ENCODE measurements at regions of chr6 and their contacts with region 1.

Region 1: GRCh38 chr6:118611334-118611733 is 40.1 kb downstream of the CEP85L start:
- DNase-seq: no peak
- ATAC-seq: no peak
- H3K4me3 ChIP-seq: no peak overlapping the region
- H3K4me3 Mint-ChIP-seq: peak overlapping the region in 1 of 10 donors; percentile 41
- H3K27ac ChIP-seq: no peak overlapping the region
- H3K27ac Mint-ChIP-seq: peak overlapping the region in 2 of 9 donors; percentile 3 to 41
- H3K4me1 ChIP-seq: peaks cover 0 to 3% of the 10 kb centered on the region in 2 donors
- H3K4me1 Mint-ChIP-seq: peaks cover 34 to 91% (median 79%) of the 10 kb centered on the region in 7 donors
- H3K27me3 ChIP-seq: no peaks in the 10 kb centered on the region
- H3K27me3 Mint-ChIP-seq: no peaks in the 10 kb centered on the region

Region 2: DNA sequence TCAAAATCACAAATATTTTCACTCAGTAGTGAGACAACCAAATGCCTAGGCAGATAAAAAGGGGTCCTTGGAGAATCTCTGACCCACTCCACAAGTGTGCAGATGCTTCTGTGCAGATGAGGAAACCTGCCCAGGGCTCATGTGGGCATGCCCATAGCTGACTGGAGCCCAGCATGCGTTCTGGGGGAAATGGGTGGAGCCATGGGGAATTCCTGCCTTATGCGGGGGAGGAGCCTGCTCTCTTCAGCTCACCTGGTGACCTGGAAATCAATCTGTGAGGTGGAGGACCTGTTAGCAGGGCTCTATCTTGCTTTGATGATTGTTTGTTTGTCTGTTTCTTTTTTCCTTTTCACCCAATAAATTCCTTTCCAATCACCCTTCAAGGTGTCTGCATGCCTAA is 86.6 kb before region 1 on chr6:
- CTCF ChIA-PET with region 1: no interaction called
- POLR2A ChIA-PET with region 1: no interaction called
- intact Hi-C with region 1: no loop called
- DNase-seq: no peak
- ATAC-seq: peak; percentile 26
- H3K4me3 ChIP-seq: no peak overlapping the region
- H3K4me3 Mint-ChIP-seq: no peak overlapping the region
- H3K27ac ChIP-seq: no peak overlapping the region
- H3K27ac Mint-ChIP-seq: peak overlapping the region in 2 of 9 donors; percentile 38 to 71
- H3K4me1 ChIP-seq: no peaks in the 10 kb centered on the region
- H3K4me1 Mint-ChIP-seq: peaks cover 17 to 58% (median 48%) of the 10 kb centered on the region in 7 donors
- H3K27me3 ChIP-seq: no peaks in the 10 kb centered on the region
- H3K27me3 Mint-ChIP-seq: no peaks in the 10 kb centered on the region

Region 3: GRCh38 chr6:118596774-118597320 is 14.5 kb before region 1 on chr6:
- CTCF ChIA-PET with region 1: no interaction called
- POLR2A ChIA-PET with region 1: interaction called, 3 read pairs
- intact Hi-C with region 1: loop called in 1 of 2 experiments (anchors 2 kb)
- DNase-seq: no peak
- ATAC-seq: no peak
- H3K4me3 ChIP-seq: no peak overlapping the region
- H3K4me3 Mint-ChIP-seq: no peak overlapping the region
- H3K27ac ChIP-seq: no peak overlapping the region
- H3K27ac Mint-ChIP-seq: peak overlapping the region in 6 of 9 donors; percentile 16 to 64 (median 38)
- H3K4me1 ChIP-seq: no peaks in the 10 kb centered on the region
- H3K4me1 Mint-ChIP-seq: peaks cover 12 to 85% (median 54%) of the 10 kb centered on the region in 7 donors
- H3K27me3 ChIP-seq: no peaks in the 10 kb centered on the region
- H3K27me3 Mint-ChIP-seq: no peaks in the 10 kb centered on the region

Measured in naive thymus-derived CD4-positive, alpha-beta T cell (primary cell).